ENCODE measurements at regions of chr1 and their contacts with region 1.

Region 1: GRCh38 chr1:51878616-51879336 is at the start of gene NRDC:
- DNase-seq: peak; percentile 100
- ATAC-seq: peak; percentile 97 to 98
- H3K4me3 ChIP-seq: peak within 1 kb of the TSS; percentile 64 to 99 (median 90)
- H3K27ac ChIP-seq: peak within 1 kb of the TSS; percentile 93 to 99 (median 96)
- H3K4me1 ChIP-seq: peaks cover 35 to 41% of the 10 kb centered on the region in 2 donors
- H3K27me3 ChIP-seq: peaks cover 0 to 20% (median 10%) of the 10 kb centered on the region in 3 donors
- CTCF ChIP-seq: peak in 1 of 5 experiments; percentile 37
- POLR2A ChIP-seq: peak; percentile 97 to 98
- total RNA-seq, gene NRDC: 180 to 270 (median 239) TPM

Region 2: GRCh38 chr1:50968158-50968820 is 910.5 kb before region 1 on chr1:
- in situ Hi-C with region 1: no loop called
- intact Hi-C with region 1: loop called (anchors 10 kb)
- DNase-seq: peak; percentile 86
- ATAC-seq: peak; percentile 81 to 85
- H3K4me3 ChIP-seq: peak overlapping the region; percentile 77 to 88 (median 80)
- H3K27ac ChIP-seq: peak overlapping the region; percentile 96 to 99 (median 99)
- H3K4me1 ChIP-seq: peaks cover 28 to 35% of the 10 kb centered on the region in 2 donors
- H3K27me3 ChIP-seq: no peaks in the 10 kb centered on the region
- CTCF ChIP-seq: peak in 4 of 5 experiments; percentile 44 to 67 (median 52)
- POLR2A ChIP-seq: peak; percentile 77 to 81

Region 3: GRCh38 chr1:51564124-51564523 is 314.7 kb before region 1 on chr1:
- in situ Hi-C with region 1: no loop called
- intact Hi-C with region 1: loop called (anchors 2 kb)
- DNase-seq: no peak
- ATAC-seq: no peak
- H3K4me3 ChIP-seq: no peak overlapping the region
- H3K27ac ChIP-seq: peak overlapping the region; percentile 91 to 94 (median 93)
- H3K4me1 ChIP-seq: peaks cover 62 to 65% of the 10 kb centered on the region in 2 donors
- H3K27me3 ChIP-seq: no peaks in the 10 kb centered on the region
- CTCF ChIP-seq: no peak
- POLR2A ChIP-seq: no peak

Region 4: GRCh38 chr1:51616901-51617708 is 261.7 kb before region 1 on chr1 and contains the start of gene OSBPL9:
- in situ Hi-C with region 1: no loop called
- intact Hi-C with region 1: loop called (anchors 5 kb)
- DNase-seq: peak; percentile 86 to 89
- ATAC-seq: peak; percentile 60 to 75
- H3K4me3 ChIP-seq: peak within 1 kb of the TSS; percentile 79 to 99 (median 94)
- H3K27ac ChIP-seq: peak within 1 kb of the TSS; percentile 94 to 99 (median 99)
- H3K4me1 ChIP-seq: peaks cover 47 to 58% of the 10 kb centered on the region in 2 donors
- H3K27me3 ChIP-seq: no peaks in the 10 kb centered on the region
- CTCF ChIP-seq: no peak
- POLR2A ChIP-seq: peak; percentile 88 to 95
- total RNA-seq, gene OSBPL9: 65.8 to 206 (median 136) TPM

Region 5: GRCh38 chr1:51627678-51628077 is 251.1 kb before region 1 on chr1:
- in situ Hi-C with region 1: no loop called
- intact Hi-C with region 1: no loop called
- DNase-seq: no peak
- ATAC-seq: no peak
- H3K4me3 ChIP-seq: no peak overlapping the region
- H3K27ac ChIP-seq: peak overlapping the region; percentile 94 to 99 (median 99)
- H3K4me1 ChIP-seq: peaks cover 74 to 92% of the 10 kb centered on the region in 2 donors
- H3K27me3 ChIP-seq: no peaks in the 10 kb centered on the region
- CTCF ChIP-seq: peak in 3 of 5 experiments; percentile 12 to 22 (median 21)
- POLR2A ChIP-seq: no peak

Region 6: GRCh38 chr1:52056163-52056936 is 177.6 kb after region 1 on chr1 and contains the start of gene BTF3L4:
- in situ Hi-C with region 1: no loop called
- intact Hi-C with region 1: loop called (anchors 2 kb)
- DNase-seq: peak; percentile 96 to 97
- ATAC-seq: peak; percentile 89 to 90
- H3K4me3 ChIP-seq: peak within 1 kb of the TSS; percentile 75 to 87 (median 86)
- H3K27ac ChIP-seq: peak within 1 kb of the TSS; percentile 92 to 98 (median 96)
- H3K4me1 ChIP-seq: peaks cover 38 to 39% of the 10 kb centered on the region in 2 donors
- H3K27me3 ChIP-seq: no peaks in the 10 kb centered on the region
- CTCF ChIP-seq: no peak
- POLR2A ChIP-seq: peak; percentile 85 to 86
- total RNA-seq, gene BTF3L4: 68.4 to 92.9 (median 72.4) TPM

Region 7: GRCh38 chr1:52726265-52727113 is 847.7 kb after region 1 on chr1 and contains the start of gene ZYG11B:
- in situ Hi-C with region 1: no loop called
- intact Hi-C with region 1: loop called (anchors 10 kb)
- DNase-seq: peak; percentile 83 to 88
- ATAC-seq: peak; percentile 87 to 89
- H3K4me3 ChIP-seq: peak within 1 kb of the TSS; percentile 75 to 90 (median 78)
- H3K27ac ChIP-seq: peak within 1 kb of the TSS; percentile 90 to 96 (median 94)
- H3K4me1 ChIP-seq: peaks cover 26 to 32% of the 10 kb centered on the region in 2 donors
- H3K27me3 ChIP-seq: no peaks in the 10 kb centered on the region
- CTCF ChIP-seq: no peak
- POLR2A ChIP-seq: peak; percentile 89 to 91
- total RNA-seq, gene ZYG11B: 136 to 248 (median 194) TPM